Posterior vena cava (tissue), 2 donors: ENCODE measurements at regions of chr11 and their contacts with region 1.

Region 1: GRCh38 chr11:35100013-35100383 is 39.0 kb upstream of the CD44 start:
- DNase-seq: no peak

Region 2: DNA sequence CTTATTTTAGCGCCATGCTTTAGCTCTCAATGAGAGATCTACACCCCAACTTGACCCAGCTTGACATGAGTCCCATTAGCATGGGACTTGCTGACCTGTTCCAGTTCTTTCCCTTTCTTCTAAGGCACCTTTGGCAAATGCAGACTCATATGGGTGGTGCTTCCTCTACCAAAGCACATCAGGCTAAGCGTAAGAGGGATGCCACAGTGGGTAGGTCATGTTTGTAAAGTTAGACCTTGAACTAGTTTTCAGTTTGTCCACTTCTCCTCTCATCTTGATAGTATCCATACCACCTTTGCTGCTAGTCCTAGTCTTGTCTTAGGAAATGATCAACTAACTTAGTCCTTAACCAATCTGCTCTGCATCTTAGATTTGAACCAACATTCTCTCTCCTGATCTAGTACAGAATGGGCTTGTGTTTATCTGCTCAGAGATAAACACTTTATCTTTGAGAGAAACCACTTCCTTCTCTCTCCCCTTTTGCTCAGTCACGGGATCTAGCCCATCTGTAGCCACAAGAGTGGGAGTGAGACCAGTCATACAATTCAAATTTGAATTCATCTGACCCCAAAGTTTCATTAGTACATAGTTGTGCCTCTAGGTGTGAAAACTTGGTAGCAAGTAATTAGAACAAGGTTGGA is 33.1 kb before region 1 on chr11:
- intact Hi-C with region 1: loop called in 1 of 2 experiments (anchors 2 kb)
- DNase-seq: no peak